ENCODE measurements at regions of chr1 and their contacts with region 1.

Region 1: DNA sequence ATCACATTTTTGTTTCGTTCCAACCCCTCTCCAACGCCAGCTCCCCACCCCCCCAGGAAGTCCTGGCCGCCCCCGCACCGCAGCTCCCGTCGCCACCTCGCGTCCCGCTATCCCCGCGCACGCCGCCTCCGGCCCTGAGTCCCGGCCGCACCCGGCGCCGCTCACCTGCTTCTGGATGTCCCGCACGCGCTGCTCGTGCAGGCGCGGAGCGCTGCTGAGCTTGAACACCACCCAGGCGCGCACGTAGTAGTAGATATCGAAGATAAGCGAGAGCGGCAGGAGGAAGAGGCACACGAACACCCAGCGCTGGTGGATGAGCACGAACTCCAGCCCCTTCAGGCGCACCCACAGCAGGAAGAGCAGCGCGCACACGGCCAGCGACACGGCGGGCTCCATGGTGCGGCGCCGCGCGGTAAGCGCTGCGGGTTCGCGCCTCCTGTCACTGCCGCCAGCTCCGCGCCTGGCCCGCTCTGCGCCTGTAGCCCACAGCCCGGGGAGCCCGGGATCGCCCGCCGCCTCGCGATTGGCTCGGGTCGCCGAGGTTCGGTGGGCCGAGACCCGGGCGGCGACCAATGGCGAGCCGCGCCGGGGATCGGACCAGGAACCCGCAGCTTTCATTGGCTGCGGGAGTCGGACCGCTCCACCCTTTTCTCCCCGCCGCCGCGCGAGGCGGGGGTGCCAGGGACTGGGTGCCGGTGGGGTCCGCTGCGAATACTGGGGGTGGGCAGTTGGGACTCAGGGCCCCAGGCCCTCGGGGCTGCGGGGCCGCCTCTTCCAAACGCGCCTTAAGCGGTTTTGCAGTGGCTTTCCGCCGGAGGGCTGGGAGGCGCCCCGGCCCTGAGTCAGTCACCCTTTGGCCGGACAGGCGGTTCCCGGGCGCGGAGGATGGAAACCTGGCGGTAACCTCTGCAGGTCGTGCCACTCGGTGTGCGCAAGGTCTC is at the start of gene DHCR24:
- DNase-seq: peak; percentile 88
- H3K4me3 ChIP-seq: peak within 1 kb of the TSS; percentile 76 to 98 (median 84)
- H3K27ac ChIP-seq: peak within 1 kb of the TSS; percentile 66
- H3K4me1 ChIP-seq: peaks cover 48% of the 10 kb centered on the region
- H3K27me3 ChIP-seq: no peaks in the 10 kb centered on the region
- CTCF ChIP-seq: no peak
- total RNA-seq, gene DHCR24: 335 to 503 TPM

Region 2: GRCh38 chr1:54922921-54923531 is 36.0 kb after region 1 on chr1:
- CTCF ChIA-PET with region 1: no interaction called
- dilution Hi-C with region 1: no loop called
- in situ Hi-C with region 1: no loop called
- intact Hi-C with region 1: loop called (anchors 5 kb)
- DNase-seq: peak; percentile 59
- H3K4me3 ChIP-seq: peak overlapping the region in 1 of 3 experiments; percentile 3
- H3K27ac ChIP-seq: no peak overlapping the region
- H3K4me1 ChIP-seq: peaks cover 13% of the 10 kb centered on the region
- H3K27me3 ChIP-seq: no peaks in the 10 kb centered on the region
- CTCF ChIP-seq: no peak

Region 3: GRCh38 chr1:54944610-54945544 is 57.9 kb after region 1 on chr1:
- CTCF ChIA-PET with region 1: interaction called, 14 read pairs
- dilution Hi-C with region 1: no loop called
- in situ Hi-C with region 1: no loop called
- intact Hi-C with region 1: loop called (anchors 1 kb)
- DNase-seq: peak; percentile 60
- H3K4me3 ChIP-seq: peak overlapping the region in 1 of 3 experiments; percentile 3
- H3K27ac ChIP-seq: no peak overlapping the region
- H3K4me1 ChIP-seq: peaks cover 12% of the 10 kb centered on the region
- H3K27me3 ChIP-seq: no peaks in the 10 kb centered on the region
- CTCF ChIP-seq: peak; percentile 88 to 89